Sciatic nerve (tissue), 2 donors: ENCODE measurements at regions of chr17 and their contacts with region 1.

Region 1: DNA sequence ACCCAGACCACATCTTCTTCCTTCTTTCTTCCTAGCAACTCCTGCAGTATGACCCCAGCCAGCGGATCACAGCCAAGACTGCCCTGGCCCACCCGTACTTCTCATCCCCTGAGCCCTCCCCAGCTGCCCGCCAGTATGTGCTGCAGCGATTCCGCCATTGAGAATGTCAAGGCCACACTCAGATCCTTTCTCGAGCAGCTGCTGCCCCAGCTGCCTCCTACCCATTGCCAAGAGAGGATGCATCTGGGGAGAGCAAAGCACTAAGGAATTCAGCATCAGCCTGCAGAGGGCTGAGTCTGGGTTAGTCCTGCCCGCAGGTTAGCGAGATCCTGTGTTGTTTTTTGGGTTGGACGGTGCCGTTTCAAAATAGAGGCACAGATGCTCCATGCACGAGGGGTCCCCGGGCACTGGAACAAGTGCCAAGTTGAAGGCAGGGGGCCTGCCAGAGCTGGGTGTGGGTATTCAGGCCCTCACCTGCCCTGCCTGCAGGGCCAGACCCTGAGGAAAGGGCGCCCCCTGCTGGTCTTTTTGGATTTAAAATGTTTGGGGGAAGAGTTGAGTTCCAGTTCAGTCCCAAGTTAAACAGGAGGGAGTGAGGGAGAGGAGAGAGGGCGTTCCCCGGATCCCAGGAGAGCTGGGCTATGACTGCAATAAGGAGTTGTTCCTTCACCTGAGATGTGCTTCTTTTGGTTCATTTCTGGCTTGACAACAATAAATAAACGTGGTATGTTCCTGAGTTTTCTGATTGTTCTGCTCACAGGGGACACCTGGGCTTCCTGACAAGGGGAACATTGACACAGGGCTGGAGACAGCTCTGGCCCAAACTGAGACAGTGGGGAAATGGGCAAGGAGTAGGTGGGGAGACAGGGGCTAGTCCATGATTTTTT is 4.9 kb downstream of the CDK3 start:
- DNase-seq: peak; percentile 94
- ATAC-seq: peak; percentile 76

Region 2: GRCh38 chr17:75904749-75905521 is 100.6 kb before region 1 on chr17 and contains the start of gene MRPL38:
- intact Hi-C with region 1: loop called (anchors 5 kb)
- DNase-seq: peak; percentile 93
- ATAC-seq: peak; percentile 96
- total RNA-seq, gene MRPL38: 73.6 TPM

Region 3: GRCh38 chr17:75917141-75917916 is 88.2 kb before region 1 on chr17:
- intact Hi-C with region 1: no loop called
- DNase-seq: no peak
- ATAC-seq: no peak

Region 4: GRCh38 chr17:75940724-75941441 is 64.6 kb before region 1 on chr17 and contains the start of gene FBF1:
- intact Hi-C with region 1: no loop called
- DNase-seq: peak; percentile 94
- ATAC-seq: peak; percentile 99
- total RNA-seq, gene FBF1: 18.5 TPM